ENCODE measurements at regions of chr6 and their contacts with region 1.

Region 1: GRCh38 chr6:26596579-26597388 is at the start of gene ABT1:
- DNase-seq: peak; percentile 98
- ATAC-seq: peak; percentile 66
- H3K4me3 Mint-ChIP-seq: no peak within 1 kb of the TSS
- H3K27ac Mint-ChIP-seq: no peak within 1 kb of the TSS
- H3K4me1 Mint-ChIP-seq: peaks cover 41% of the 10 kb centered on the region
- H3K27me3 Mint-ChIP-seq: peaks cover 18% of the 10 kb centered on the region
- total RNA-seq, gene ABT1: 21.5 to 24.9 TPM

Region 2: DNA sequence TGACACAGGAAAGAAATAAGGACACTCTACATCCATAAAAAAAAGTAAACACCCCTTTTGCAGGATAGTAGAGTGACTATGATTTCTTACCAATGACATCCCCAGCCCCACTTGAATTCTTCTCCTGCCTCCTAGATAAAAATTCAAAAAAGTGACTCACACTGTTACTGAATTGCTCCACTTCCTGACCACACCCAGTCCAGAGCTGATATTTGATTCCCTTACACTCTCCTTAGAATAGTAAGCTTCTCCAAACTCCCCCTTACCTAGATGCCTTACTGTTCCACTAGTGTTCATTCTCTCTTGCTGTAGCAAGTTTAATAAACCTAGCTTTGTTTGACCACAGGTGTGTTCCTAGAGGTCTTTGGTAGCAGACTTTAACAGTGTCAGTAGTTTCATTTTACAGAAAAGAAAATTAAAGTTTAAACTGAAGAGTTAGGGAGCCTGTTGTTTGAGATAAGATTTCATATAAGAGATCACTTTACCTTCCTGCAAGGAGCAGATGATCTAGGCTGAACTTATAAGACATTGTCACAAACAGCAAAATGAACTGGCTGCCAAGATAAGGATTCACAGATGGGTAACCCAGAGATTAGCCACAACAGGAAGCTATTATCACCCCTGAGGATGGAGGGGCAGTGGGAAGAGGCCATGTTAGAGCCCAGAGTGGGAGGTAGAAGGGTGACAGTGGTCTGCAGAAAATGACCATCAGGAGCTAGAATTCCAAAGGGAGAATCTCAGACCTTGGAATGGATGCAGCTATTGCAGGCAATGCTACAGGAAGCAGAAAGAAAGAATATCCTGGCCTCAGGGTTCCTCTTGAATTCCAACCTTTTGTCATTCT is 260.2 kb before region 1 on chr6:
- CTCF ChIA-PET with region 1: interaction called, 10 read pairs
- POLR2A ChIA-PET with region 1: no interaction called
- intact Hi-C with region 1: loop called (anchors 1 kb)
- DNase-seq: no peak
- ATAC-seq: no peak
- H3K4me3 Mint-ChIP-seq: no peak overlapping the region
- H3K27ac Mint-ChIP-seq: no peak overlapping the region
- H3K4me1 Mint-ChIP-seq: peaks cover 20% of the 10 kb centered on the region
- H3K27me3 Mint-ChIP-seq: peaks cover 9% of the 10 kb centered on the region

Region 3: GRCh38 chr6:26493258-26493657 is 103.5 kb before region 1 on chr6:
- CTCF ChIA-PET with region 1: no interaction called
- POLR2A ChIA-PET with region 1: no interaction called
- intact Hi-C with region 1: no loop called
- DNase-seq: no peak
- ATAC-seq: peak; percentile 71
- H3K4me3 Mint-ChIP-seq: no peak overlapping the region
- H3K27ac Mint-ChIP-seq: no peak overlapping the region
- H3K4me1 Mint-ChIP-seq: peaks cover 10% of the 10 kb centered on the region
- H3K27me3 Mint-ChIP-seq: no peaks in the 10 kb centered on the region

Region 4: GRCh38 chr6:26532699-26533531 is 63.9 kb before region 1 on chr6:
- CTCF ChIA-PET with region 1: interaction called, 8 read pairs
- POLR2A ChIA-PET with region 1: no interaction called
- intact Hi-C with region 1: loop called (anchors 1 to 2 kb)
- DNase-seq: peak; percentile 94
- ATAC-seq: peak; percentile 40
- H3K4me3 Mint-ChIP-seq: peak overlapping the region; percentile 96
- H3K27ac Mint-ChIP-seq: peak overlapping the region; percentile 95
- H3K4me1 Mint-ChIP-seq: peaks cover 40% of the 10 kb centered on the region
- H3K27me3 Mint-ChIP-seq: no peaks in the 10 kb centered on the region

Region 5: GRCh38 chr6:26568601-26569432 is 28.0 kb before region 1 on chr6:
- CTCF ChIA-PET with region 1: interaction called, 44 read pairs
- POLR2A ChIA-PET with region 1: interaction called, 3 read pairs
- intact Hi-C with region 1: loop called (anchors 1 kb)
- DNase-seq: peak; percentile 97
- ATAC-seq: peak; percentile 74
- H3K4me3 Mint-ChIP-seq: peak overlapping the region; percentile 85
- H3K27ac Mint-ChIP-seq: peak overlapping the region; percentile 81
- H3K4me1 Mint-ChIP-seq: peaks cover 29% of the 10 kb centered on the region
- H3K27me3 Mint-ChIP-seq: peaks cover 2% of the 10 kb centered on the region

Region 6: DNA sequence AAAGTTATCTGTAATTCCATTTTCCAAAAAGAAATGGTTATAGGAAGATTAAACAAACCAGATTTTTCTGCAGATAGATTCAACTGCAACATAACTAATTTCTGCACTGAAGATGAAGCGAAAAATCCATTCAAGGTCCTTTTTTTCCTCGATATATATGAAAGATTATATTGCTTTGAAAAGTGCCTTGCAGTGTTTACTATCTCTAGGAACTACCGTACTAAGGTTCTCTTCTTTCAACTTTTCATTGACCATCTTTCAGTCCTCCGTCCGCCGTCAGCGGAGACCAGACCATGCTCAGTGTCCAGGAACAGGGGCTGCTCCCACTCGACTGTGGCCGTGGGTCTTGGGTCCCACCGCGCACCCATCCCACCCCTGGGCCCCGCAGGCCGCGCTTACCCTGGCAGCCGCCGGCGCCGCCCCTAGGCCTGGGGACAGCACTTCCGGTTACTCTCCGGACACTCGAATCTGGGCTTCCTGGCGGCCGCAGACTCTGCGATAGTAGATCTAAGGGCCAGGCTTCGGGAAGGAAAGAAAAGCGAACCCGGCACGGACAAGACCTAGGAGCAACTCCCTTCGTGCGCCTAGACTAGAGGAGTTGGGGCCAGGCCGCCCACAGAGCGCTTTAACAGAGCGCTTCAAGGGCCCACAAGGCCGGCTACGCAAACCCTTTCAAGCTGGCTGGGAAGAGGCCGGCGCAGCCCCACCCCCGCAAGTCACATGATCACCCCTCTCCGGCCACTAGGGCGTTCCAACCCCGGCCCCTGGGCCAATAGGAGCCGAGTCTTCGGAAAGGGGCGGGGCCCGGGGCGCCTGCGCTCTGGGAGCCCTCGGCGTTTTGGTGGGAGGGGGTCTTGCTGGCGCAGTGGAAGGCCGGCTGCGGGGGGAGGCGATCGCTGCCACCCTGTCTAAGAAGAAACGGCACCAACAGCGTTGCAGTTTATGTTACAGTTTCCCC is 62.5 kb after region 1 on chr6 and contains the start of gene ZNF322:
- CTCF ChIA-PET with region 1: no interaction called
- POLR2A ChIA-PET with region 1: no interaction called
- intact Hi-C with region 1: loop called in 1 of 2 experiments (anchors 2 kb)
- DNase-seq: peak; percentile 94
- ATAC-seq: peak; percentile 100
- H3K4me3 Mint-ChIP-seq: peak within 1 kb of the TSS; percentile 74
- H3K27ac Mint-ChIP-seq: peak within 1 kb of the TSS; percentile 37
- H3K4me1 Mint-ChIP-seq: peaks cover 27% of the 10 kb centered on the region
- H3K27me3 Mint-ChIP-seq: peaks cover 24% of the 10 kb centered on the region
- total RNA-seq, gene ZNF322: 5.2 to 8.4 TPM